CD8-positive, alpha-beta memory T cell (primary cell): ENCODE measurements at regions of chr20 and their contacts with region 1.

Region 1: DNA sequence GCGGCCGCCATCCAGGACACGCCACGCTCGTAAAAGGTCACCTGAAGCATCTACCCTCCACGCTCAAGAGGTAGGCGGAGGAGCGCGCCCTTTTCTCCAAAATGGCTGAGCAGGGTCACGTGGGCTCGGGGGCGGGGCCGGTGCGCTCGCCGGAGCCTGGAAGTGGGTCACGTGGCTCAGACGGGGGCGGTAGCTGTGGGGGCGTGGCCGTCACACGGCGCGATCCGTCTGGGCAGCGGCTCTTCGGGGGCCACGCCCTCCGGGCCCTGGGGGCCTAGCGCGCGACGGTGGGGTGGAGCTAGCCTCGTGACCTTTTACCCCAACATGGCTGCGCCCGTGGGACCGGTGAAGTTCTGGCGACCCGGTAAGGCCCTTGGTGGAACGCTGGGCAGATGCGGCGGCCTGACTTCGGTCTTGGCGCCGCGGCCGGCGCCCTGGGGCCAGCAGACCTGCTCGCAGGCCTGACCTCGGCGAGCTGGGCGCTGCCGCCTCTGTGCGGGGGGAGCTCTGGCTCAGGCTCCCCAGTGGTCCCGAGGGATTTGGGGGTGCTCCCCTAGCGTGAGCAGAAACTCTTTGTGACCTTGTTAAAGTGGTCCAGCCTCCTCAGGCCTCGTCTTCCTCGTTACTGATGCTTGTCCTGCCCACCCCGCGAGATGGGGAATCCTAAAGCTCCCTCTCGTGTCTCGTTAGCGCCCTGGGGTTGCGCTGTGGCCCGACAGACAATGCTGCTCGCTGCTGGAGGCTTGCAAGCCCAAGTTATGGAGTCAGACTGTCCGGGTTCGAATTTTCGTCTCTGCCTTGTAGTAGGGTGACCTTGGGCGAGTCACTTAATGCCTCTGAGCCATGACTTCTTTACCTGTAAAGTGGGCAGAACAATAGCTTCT is at the start of gene DHX35:
- DNase-seq: peak; percentile 98 to 99 (median 98)
- H3K4me3 ChIP-seq: peak within 1 kb of the TSS; percentile 99
- H3K4me3 Mint-ChIP-seq: peak within 1 kb of the TSS; percentile 91 to 98 (median 95)
- H3K27ac ChIP-seq: peak within 1 kb of the TSS; percentile 84
- H3K27ac Mint-ChIP-seq: peak within 1 kb of the TSS; percentile 85 to 97 (median 95)
- H3K4me1 ChIP-seq: peaks cover 21% of the 10 kb centered on the region
- H3K4me1 Mint-ChIP-seq: peaks cover 23 to 34% (median 33%) of the 10 kb centered on the region in 3 donors
- H3K27me3 ChIP-seq: no peaks in the 10 kb centered on the region
- H3K27me3 Mint-ChIP-seq: no peaks in the 10 kb centered on the region
- total RNA-seq, gene DHX35: 19.9 to 20.5 TPM

Region 2: DNA sequence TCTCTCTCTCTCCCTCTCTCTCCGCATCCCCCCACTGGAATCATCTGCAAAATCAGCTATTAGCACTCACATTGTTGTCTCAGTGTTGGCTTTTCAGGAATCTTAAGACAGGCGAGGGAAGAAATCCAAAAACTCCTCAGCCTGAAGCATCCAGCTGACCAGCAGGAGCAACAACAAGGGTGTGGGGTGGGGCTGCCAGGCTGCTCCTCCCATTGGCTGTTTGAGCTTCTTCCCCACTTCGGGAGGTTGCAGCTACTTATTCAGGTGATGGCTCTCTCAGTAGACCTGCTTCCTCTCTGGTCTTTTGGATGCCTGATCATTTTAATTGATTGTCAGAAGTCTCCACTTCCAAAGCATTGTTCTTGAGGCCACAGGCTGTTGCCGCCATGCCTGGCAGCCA is 262.1 kb before region 1 on chr20:
- CTCF ChIA-PET with region 1: no interaction called
- POLR2A ChIA-PET with region 1: no interaction called
- DNase-seq: no peak
- H3K4me3 ChIP-seq: no peak overlapping the region
- H3K4me3 Mint-ChIP-seq: no peak overlapping the region
- H3K27ac ChIP-seq: no peak overlapping the region
- H3K27ac Mint-ChIP-seq: no peak overlapping the region
- H3K4me1 ChIP-seq: no peaks in the 10 kb centered on the region
- H3K4me1 Mint-ChIP-seq: no peaks in the 10 kb centered on the region
- H3K27me3 ChIP-seq: peaks cover 13% of the 10 kb centered on the region
- H3K27me3 Mint-ChIP-seq: peaks cover 22 to 44% of the 10 kb centered on the region in 2 donors

Region 3: DNA sequence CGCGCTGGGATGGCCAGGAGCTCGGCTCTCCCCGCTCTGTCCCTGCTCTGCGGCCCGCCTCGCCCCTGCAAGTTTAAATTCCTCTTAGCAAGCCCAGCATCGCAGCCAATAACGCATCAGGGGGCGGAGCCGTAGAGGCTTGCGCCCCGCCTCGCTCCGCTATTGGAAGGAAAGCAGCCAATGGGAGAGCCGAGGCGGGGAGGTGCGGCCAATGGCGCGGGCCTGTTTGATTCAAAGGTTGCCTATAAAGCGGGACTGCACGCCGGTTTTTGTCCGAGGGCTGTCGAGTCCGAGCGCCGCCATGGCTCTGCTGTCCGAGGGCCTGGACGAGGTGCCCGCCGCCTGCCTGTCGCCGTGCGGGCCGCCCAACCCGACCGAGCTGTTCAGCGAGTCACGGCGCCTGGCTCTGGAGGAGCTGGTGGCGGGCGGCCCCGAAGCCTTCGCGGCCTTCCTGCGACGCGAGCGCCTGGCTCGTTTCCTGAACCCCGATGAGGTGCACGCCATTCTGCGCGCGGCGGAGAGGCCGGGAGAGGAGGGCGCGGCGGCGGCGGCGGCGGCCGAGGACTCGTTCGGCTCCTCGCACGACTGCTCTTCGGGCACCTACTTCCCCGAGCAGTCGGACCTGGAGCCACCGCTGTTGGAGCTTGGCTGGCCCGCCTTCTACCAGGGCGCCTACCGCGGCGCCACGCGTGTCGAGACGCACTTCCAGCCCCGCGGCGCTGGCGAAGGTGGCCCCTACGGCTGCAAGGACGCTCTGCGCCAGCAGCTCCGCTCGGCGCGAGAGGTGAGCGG is 35.9 kb before region 1 on chr20 and contains the start of gene FAM83D:
- CTCF ChIA-PET with region 1: interaction called, 12 read pairs
- POLR2A ChIA-PET with region 1: interaction called, 11 read pairs
- DNase-seq: peak; percentile 90 to 94 (median 91)
- H3K4me3 ChIP-seq: peak within 1 kb of the TSS; percentile 66
- H3K4me3 Mint-ChIP-seq: peak within 1 kb of the TSS; percentile 78 to 96 (median 83)
- H3K27ac ChIP-seq: peak within 1 kb of the TSS; percentile 70
- H3K27ac Mint-ChIP-seq: peak within 1 kb of the TSS; percentile 26 to 90 (median 72)
- H3K4me1 ChIP-seq: peaks cover 22% of the 10 kb centered on the region
- H3K4me1 Mint-ChIP-seq: peaks cover 25 to 43% (median 33%) of the 10 kb centered on the region in 3 donors
- H3K27me3 ChIP-seq: no peaks in the 10 kb centered on the region
- H3K27me3 Mint-ChIP-seq: peaks cover 0 to 5% of the 10 kb centered on the region in 2 donors
- total RNA-seq, gene FAM83D: 11.9 to 13.2 TPM